ENCODE measurements at regions of chr6 and their contacts with region 1.

Region 1: DNA sequence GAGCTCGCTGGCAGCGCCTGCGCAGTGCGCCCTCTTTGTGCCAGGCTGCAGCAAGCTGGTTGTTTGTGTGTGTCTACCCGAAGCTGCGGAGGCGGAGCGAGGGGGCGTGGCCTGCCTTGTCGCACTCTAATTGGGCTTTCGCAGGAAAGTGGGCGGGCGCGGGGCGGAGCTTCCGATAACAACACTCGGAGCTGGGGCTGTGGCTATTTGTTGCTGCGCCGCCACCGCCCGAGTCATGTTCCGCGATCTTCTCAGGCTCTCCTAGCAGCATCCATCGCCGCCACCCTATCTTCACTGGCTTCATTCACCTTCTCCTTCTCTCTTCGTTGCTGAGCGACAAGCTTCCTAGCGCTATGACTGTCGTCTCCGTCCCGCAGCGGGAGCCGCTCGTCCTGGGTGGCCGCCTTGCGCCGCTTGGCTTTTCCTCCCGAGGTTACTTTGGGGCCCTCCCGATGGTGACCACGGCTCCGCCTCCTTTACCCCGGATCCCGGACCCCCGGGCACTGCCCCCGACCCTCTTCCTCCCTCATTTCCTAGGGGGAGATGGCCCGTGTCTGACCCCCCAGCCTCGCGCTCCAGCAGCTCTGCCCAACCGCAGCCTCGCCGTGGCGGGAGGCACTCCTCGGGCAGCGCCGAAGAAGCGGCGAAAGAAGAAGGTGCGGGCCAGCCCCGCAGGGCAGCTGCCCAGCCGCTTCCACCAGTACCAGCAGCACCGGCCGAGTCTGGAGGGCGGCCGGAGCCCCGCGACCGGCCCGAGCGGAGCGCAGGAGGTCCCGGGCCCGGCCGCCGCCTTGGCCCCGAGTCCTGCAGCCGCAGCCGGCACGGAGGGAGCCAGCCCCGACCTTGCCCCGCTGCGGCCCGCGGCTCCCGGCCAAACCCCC is at the start of gene PNRC1:
- DNase-seq: peak; percentile 100
- H3K4me3 ChIP-seq: peak within 1 kb of the TSS; percentile 95
- H3K4me3 Mint-ChIP-seq: peak within 1 kb of the TSS; percentile 93 to 99 (median 97)
- H3K27ac ChIP-seq: peak within 1 kb of the TSS; percentile 99
- H3K27ac Mint-ChIP-seq: peak within 1 kb of the TSS; percentile 95 to 99 (median 98)
- H3K4me1 ChIP-seq: peaks cover 38% of the 10 kb centered on the region
- H3K4me1 Mint-ChIP-seq: peaks cover 41 to 53% (median 53%) of the 10 kb centered on the region in 3 donors
- H3K27me3 ChIP-seq: no peaks in the 10 kb centered on the region
- H3K27me3 Mint-ChIP-seq: peaks cover 0 to 13% of the 10 kb centered on the region in 2 donors
- total RNA-seq, gene PNRC1: 79.4 to 84.5 TPM

Region 2: GRCh38 chr6:88725111-88725975 is 355.4 kb before region 1 on chr6:
- CTCF ChIA-PET with region 1: no interaction called
- POLR2A ChIA-PET with region 1: no interaction called
- DNase-seq: no peak
- H3K4me3 ChIP-seq: no peak overlapping the region
- H3K4me3 Mint-ChIP-seq: peak overlapping the region in 1 of 7 donors; percentile 16
- H3K27ac ChIP-seq: no peak overlapping the region
- H3K27ac Mint-ChIP-seq: peak overlapping the region in 4 of 8 donors; percentile 5 to 89 (median 45)
- H3K4me1 ChIP-seq: no peaks in the 10 kb centered on the region
- H3K4me1 Mint-ChIP-seq: peaks cover 20 to 29% (median 28%) of the 10 kb centered on the region in 3 donors
- H3K27me3 ChIP-seq: no peaks in the 10 kb centered on the region
- H3K27me3 Mint-ChIP-seq: no peaks in the 10 kb centered on the region

Region 3: DNA sequence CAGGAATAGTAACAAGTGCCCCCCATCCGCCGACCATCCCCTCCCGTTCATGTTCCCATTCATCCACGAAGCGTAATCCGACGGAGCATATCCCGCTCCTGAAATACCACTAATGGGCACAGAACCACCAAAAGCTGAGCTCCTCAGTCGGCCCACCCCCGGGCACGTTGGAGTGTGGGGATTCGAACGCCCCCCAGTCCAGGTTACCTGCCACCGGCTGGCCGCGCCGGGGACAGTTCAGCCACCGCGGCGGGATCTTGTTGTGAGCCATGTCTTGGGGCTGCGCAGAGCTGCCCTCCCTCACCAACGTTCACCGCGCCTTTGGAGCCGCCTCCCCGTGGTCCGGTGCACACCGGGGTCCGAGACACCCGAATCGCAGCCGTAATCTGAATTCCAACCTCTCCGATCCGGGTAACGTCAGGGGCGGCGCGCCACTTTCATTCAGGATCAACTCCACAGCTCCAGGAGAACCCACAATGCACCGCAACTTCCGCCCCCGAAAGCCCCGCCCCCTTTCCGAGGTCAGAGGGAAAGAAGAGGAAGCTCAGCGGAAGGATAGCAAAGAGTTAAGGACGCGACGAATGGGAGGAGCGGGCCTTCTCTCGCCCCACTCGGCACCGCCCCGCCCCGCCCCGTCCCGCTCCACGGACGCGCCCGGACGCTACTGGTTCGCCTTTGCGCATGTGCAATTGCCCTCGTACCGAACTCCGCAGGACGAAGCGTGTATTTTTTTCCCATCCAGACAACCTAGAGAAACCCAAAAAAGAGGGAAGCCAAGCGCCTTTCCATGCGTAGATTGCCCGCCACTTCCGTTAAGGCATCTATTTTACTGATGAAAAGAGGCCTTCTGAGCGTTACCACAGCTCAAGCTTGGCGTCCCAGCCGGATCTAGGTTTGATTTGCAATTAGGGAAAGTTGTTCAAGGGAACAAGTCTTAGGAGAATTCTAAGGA is 117.4 kb before region 1 on chr6 and contains the start of gene RNGTT:
- CTCF ChIA-PET with region 1: interaction called, 4 read pairs
- POLR2A ChIA-PET with region 1: interaction called, 47 read pairs
- DNase-seq: peak; percentile 94 to 99 (median 97)
- H3K4me3 ChIP-seq: peak within 1 kb of the TSS; percentile 97
- H3K4me3 Mint-ChIP-seq: peak within 1 kb of the TSS; percentile 95 to 99 (median 98)
- H3K27ac ChIP-seq: peak within 1 kb of the TSS; percentile 77
- H3K27ac Mint-ChIP-seq: peak within 1 kb of the TSS; percentile 82 to 98 (median 94)
- H3K4me1 ChIP-seq: peaks cover 17% of the 10 kb centered on the region
- H3K4me1 Mint-ChIP-seq: peaks cover 31 to 62% (median 59%) of the 10 kb centered on the region in 3 donors
- H3K27me3 ChIP-seq: no peaks in the 10 kb centered on the region
- H3K27me3 Mint-ChIP-seq: peaks cover 0 to 2% of the 10 kb centered on the region in 2 donors
- total RNA-seq, gene RNGTT: 20.7 to 22.3 TPM

Region 4: GRCh38 chr6:89066940-89067646 is 13.7 kb before region 1 on chr6:
- CTCF ChIA-PET with region 1: interaction called, 15 read pairs
- POLR2A ChIA-PET with region 1: interaction called, 7 read pairs
- DNase-seq: no peak
- H3K4me3 ChIP-seq: no peak overlapping the region
- H3K4me3 Mint-ChIP-seq: no peak overlapping the region
- H3K27ac ChIP-seq: no peak overlapping the region
- H3K27ac Mint-ChIP-seq: no peak overlapping the region
- H3K4me1 ChIP-seq: no peaks in the 10 kb centered on the region
- H3K4me1 Mint-ChIP-seq: no peaks in the 10 kb centered on the region
- H3K27me3 ChIP-seq: no peaks in the 10 kb centered on the region
- H3K27me3 Mint-ChIP-seq: peaks cover 2 to 16% of the 10 kb centered on the region in 2 donors

Region 5: DNA sequence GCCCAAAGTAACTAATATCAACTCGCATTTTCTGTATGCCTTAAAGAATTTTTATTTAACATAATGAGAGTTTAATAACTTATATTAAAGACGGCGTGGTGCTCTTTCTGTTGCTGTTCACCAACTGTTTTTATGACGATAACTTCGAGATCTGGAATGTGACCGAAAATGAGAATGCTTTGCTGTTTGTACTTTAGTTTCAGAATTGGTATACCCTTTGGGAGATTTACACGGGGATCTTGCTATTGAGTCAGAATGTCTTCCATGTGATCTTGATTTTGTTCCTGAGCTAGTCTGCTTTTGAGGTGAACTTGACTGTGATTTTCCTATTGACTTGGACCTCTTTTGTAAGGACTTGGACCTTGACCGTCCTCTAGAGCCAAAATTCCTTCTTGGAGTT is 17.7 kb after region 1 on chr6:
- CTCF ChIA-PET with region 1: no interaction called
- POLR2A ChIA-PET with region 1: no interaction called
- DNase-seq: no peak
- H3K4me3 ChIP-seq: no peak overlapping the region
- H3K4me3 Mint-ChIP-seq: peak overlapping the region in 3 of 7 donors; percentile 4 to 42 (median 25)
- H3K27ac ChIP-seq: no peak overlapping the region
- H3K27ac Mint-ChIP-seq: no peak overlapping the region
- H3K4me1 ChIP-seq: no peaks in the 10 kb centered on the region
- H3K4me1 Mint-ChIP-seq: peaks cover 6 to 16% (median 7%) of the 10 kb centered on the region in 3 donors
- H3K27me3 ChIP-seq: no peaks in the 10 kb centered on the region
- H3K27me3 Mint-ChIP-seq: no peaks in the 10 kb centered on the region

Region 6: DNA sequence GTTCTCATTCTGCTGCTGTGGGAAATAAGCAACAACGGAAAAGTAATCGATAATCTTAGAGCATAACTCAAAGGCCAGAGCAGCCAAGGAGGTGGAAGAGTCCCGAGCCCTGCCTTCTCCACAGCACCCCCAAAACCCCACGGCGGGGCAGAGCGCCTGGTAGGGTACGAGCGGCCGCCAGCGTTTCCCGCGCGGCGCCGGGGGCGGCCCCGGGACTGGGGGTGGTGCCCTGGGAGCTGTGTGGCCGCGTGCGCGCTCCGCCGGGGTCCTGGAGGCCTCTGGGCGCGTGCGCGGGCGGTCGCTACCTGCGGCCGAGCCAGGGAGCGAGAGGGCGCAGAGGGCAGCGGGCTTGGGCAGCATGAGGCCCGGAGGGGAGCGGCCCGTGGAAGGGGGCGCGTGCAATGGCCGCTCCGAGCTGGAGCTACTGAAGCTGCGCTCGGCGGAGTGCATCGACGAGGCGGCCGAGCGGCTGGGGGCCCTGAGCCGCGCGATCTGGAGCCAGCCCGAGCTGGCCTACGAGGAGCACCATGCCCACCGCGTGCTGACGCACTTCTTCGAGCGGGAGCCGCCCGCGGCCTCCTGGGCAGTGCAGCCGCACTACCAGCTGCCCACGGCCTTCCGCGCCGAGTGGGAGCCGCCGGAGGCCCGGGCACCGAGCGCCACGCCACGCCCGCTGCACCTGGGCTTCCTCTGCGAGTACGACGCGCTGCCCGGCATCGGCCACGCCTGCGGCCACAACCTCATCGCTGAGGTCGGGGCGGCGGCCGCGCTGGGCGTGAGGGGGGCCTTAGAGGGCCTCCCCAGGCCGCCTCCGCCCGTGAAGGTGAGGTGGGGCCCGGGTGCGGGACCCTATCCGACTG is 65.2 kb after region 1 on chr6 and contains the start of gene PM20D2:
- CTCF ChIA-PET with region 1: interaction called, 21 read pairs
- POLR2A ChIA-PET with region 1: interaction called, 91 read pairs
- DNase-seq: peak; percentile 47 to 70 (median 59)
- H3K4me3 ChIP-seq: peak within 1 kb of the TSS; percentile 73
- H3K4me3 Mint-ChIP-seq: peak within 1 kb of the TSS; percentile 91 to 98 (median 94)
- H3K27ac ChIP-seq: peak within 1 kb of the TSS; percentile 62
- H3K27ac Mint-ChIP-seq: peak within 1 kb of the TSS; percentile 44 to 97 (median 96)
- H3K4me1 ChIP-seq: peaks cover 9% of the 10 kb centered on the region
- H3K4me1 Mint-ChIP-seq: peaks cover 22 to 45% (median 36%) of the 10 kb centered on the region in 3 donors
- H3K27me3 ChIP-seq: no peaks in the 10 kb centered on the region
- H3K27me3 Mint-ChIP-seq: no peaks in the 10 kb centered on the region
- total RNA-seq, gene PM20D2: 17.6 to 18.7 TPM

Region 7: DNA sequence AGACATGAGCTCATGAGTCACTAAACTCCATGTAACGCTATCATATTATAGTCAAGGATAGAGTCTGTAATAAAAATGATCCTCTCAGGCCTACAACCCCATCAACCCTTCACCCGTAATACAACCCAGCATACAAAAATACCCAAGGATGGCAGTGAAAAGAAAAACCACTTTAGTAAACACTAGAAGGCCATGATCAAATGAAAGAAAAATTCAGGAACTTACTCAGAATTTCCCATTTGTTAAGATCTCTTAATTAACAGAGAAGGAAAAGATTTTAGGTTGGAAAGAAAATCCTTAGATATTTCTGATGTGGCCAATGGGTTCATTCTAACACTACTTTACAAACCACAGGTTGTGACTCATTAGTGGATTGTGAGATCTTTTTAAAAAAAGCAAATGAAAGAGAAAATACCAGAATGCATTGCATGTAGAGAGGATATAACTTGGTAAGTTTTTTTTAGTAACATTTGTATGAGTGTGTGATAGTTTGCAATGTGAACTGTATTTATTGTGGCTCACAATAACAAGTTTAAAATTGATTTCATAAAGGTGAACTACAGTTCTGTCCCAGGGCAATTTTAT is 279.7 kb after region 1 on chr6:
- CTCF ChIA-PET with region 1: no interaction called
- POLR2A ChIA-PET with region 1: interaction called, 10 read pairs
- DNase-seq: no peak
- H3K4me3 ChIP-seq: no peak overlapping the region
- H3K4me3 Mint-ChIP-seq: peak overlapping the region in 1 of 7 donors; percentile 51
- H3K27ac ChIP-seq: no peak overlapping the region
- H3K27ac Mint-ChIP-seq: peak overlapping the region in 3 of 8 donors; percentile 18 to 53 (median 19)
- H3K4me1 ChIP-seq: peaks cover 24% of the 10 kb centered on the region
- H3K4me1 Mint-ChIP-seq: peaks cover 24 to 47% (median 45%) of the 10 kb centered on the region in 3 donors
- H3K27me3 ChIP-seq: no peaks in the 10 kb centered on the region
- H3K27me3 Mint-ChIP-seq: no peaks in the 10 kb centered on the region

Measured in CD8-positive, alpha-beta memory T cell (primary cell).